Gastrocnemius medialis (tissue), 4 donors: ENCODE measurements at regions of chr17 and their contacts with region 1.

Region 1: DNA sequence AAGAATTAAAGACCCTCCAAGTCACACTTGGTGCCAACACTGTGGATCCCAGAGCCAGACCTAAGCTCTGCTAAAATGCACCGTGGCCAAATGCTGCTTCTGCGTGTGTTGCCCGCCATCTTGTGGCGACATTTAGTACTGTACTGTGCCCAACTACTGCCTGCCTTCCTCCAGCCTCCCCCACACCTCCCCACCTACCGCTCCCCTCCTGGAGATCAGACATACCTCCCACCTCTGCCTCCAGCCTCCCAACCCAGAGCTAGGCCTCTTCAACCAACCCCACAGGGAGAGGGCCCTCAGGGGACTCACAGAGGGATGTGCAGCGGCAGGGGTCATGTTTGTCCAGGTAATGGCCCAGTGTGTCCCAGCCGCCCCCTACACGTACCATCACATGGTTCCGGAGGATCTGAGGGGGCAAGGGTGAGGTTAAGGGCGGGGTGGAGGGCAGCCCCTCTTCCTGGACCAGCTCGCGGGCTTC is 5.5 kb downstream of the GAS2L2 start:
- DNase-seq: peak; percentile 52 to 66
- ATAC-seq: peak; percentile 81 to 89
- H3K4me3 ChIP-seq: no peak overlapping the region
- H3K27ac ChIP-seq: no peak overlapping the region
- H3K4me1 ChIP-seq: peaks cover 11% of the 10 kb centered on the region in 2 donors
- H3K27me3 ChIP-seq: peaks cover 12 to 23% (median 14%) of the 10 kb centered on the region in 3 donors
- CTCF ChIP-seq: peak; percentile 88 to 94 (median 92)
- POLR2A ChIP-seq: no peak

Region 2: DNA sequence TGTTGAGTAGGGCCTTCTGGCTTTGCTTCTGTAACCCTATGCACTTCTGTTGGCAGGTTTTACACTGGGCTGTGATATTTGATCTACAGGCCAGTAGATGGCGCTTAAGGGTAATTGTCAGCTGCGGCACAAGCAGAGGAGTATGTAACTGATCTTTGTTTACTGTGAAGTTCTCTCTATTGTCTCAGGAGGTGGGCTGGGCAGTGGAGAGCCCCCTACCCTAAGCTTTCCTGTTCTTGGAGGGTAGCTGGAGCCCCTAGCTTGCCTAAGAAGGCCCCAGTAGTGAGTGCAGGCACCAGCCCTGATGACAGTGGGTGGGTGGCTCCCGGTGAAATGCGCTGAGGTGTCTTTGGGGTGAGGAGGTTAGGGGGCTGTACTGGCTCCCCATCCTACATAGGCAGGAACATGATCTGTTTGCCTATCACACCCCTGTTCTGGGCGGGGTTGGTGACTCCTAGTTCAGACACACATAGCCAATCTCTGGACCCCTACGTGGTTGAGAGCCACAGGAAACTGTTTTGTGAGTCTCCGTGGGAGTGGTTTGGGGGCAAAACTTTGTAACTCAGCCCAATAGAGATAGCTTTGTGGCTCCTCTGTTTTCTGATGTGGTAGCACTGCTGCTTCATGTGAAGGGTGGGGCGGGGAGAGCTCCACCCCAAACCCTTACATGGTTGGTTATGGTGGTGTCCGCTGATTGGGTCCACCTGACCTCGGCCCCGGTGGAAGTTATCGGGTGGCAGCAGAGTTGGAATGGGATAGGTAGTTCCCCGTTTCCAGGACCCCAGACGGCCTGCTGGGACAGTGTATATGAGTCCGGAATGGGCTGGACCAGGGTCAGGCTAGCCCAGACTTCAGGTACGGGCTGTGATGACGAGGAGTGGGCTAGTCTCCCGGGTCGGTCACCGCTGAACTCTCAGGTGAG is 434.5 kb before region 1 on chr17:
- in situ Hi-C with region 1: loop called in 1 of 4 experiments (anchors 10 kb)
- intact Hi-C with region 1: loop called (anchors 2 kb)
- DNase-seq: peak; percentile 53 to 58
- ATAC-seq: peak; percentile 64 to 86
- H3K4me3 ChIP-seq: peak overlapping the region; percentile 52 to 69 (median 56)
- H3K27ac ChIP-seq: peak overlapping the region; percentile 79 to 88 (median 85)
- H3K4me1 ChIP-seq: peaks cover 18 to 39% of the 10 kb centered on the region in 2 donors
- H3K27me3 ChIP-seq: no peaks in the 10 kb centered on the region
- CTCF ChIP-seq: peak; percentile 67 to 85 (median 80)
- POLR2A ChIP-seq: peak; percentile 18 to 72

Region 3: GRCh38 chr17:35612924-35613521 is 134.6 kb before region 1 on chr17:
- in situ Hi-C with region 1: loop called (anchors 5 to 10 kb)
- intact Hi-C with region 1: loop called (anchors 1 kb)
- DNase-seq: peak in 1 of 2 donors; percentile 54
- ATAC-seq: peak in 1 of 2 donors; percentile 40
- H3K4me3 ChIP-seq: no peak overlapping the region
- H3K27ac ChIP-seq: peak overlapping the region in 1 of 4 donors; percentile 17
- H3K4me1 ChIP-seq: peaks cover 33 to 44% of the 10 kb centered on the region in 2 donors
- H3K27me3 ChIP-seq: no peaks in the 10 kb centered on the region
- CTCF ChIP-seq: peak; percentile 49 to 67 (median 60)
- POLR2A ChIP-seq: no peak

Region 4: GRCh38 chr17:35666967-35667532 is 80.5 kb before region 1 on chr17:
- in situ Hi-C with region 1: loop called in 1 of 4 experiments (anchors 10 kb)
- intact Hi-C with region 1: no loop called
- DNase-seq: no peak
- ATAC-seq: no peak
- H3K4me3 ChIP-seq: no peak overlapping the region
- H3K27ac ChIP-seq: no peak overlapping the region
- H3K4me1 ChIP-seq: no peaks in the 10 kb centered on the region
- H3K27me3 ChIP-seq: no peaks in the 10 kb centered on the region
- CTCF ChIP-seq: no peak
- POLR2A ChIP-seq: no peak